Pancreas (tissue), 10 donors: ENCODE measurements at regions of chr11 and their contacts with region 1.

Region 1: GRCh38 chr11:13280092-13280722 is 2.6 kb downstream of the BMAL1 start:
- DNase-seq: no peak
- ATAC-seq: no peak
- H3K4me3 ChIP-seq: no peak overlapping the region
- H3K27ac ChIP-seq: no peak overlapping the region
- H3K4me1 ChIP-seq: peaks cover 0 to 11% (median 11%) of the 10 kb centered on the region in 3 donors
- H3K27me3 ChIP-seq: no peaks in the 10 kb centered on the region
- CTCF ChIP-seq: no peak

Region 2: DNA sequence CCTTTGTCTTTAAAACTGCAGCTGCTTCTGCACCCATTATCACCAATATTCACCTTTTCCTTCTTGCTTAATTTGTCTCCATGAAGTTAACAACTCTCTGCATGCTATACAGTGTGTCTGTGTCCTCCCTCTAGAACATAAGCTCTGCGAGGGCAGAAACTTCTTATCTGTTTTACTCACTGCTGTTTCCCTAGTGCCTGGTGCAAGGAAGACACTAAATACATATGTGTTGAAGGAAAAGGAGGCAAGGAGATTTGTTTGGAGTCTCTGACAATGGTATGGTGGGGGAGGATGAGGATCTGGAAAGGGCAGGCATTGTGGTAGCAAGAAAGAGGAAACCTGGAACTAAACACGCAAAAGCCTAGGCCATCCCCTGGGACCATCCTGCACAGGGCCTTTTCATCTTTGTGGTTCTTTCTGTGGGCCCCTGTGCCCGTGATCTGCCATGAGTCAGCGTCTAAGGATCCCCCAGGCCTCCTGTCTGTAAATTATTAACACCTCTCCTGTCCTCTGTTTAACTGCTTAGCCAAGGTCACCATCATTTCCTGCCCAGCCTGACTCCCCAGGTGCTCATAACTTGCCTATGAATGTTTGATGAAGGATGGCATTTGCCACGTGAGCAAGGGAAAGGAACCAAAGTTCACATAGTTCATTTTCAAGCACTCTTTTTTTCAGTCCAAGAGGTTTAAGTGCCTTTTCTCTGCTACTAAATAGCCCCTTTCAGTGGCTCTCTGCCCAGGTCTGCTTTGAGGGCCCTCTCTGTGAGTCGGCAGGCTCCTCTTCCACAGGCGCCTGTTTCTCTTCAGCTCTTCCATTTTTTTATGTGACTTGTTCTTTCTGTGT is 140.0 kb before region 1 on chr11:
- intact Hi-C with region 1: no loop called
- DNase-seq: peak in 5 of 6 donors; percentile 54 to 86 (median 78)
- ATAC-seq: peak; percentile 96 to 99 (median 98)
- H3K4me3 ChIP-seq: no peak overlapping the region
- H3K27ac ChIP-seq: peak overlapping the region; percentile 13 to 82 (median 58)
- H3K4me1 ChIP-seq: peaks cover 13 to 17% (median 14%) of the 10 kb centered on the region in 3 donors
- H3K27me3 ChIP-seq: no peaks in the 10 kb centered on the region
- CTCF ChIP-seq: no peak

Region 3: DNA sequence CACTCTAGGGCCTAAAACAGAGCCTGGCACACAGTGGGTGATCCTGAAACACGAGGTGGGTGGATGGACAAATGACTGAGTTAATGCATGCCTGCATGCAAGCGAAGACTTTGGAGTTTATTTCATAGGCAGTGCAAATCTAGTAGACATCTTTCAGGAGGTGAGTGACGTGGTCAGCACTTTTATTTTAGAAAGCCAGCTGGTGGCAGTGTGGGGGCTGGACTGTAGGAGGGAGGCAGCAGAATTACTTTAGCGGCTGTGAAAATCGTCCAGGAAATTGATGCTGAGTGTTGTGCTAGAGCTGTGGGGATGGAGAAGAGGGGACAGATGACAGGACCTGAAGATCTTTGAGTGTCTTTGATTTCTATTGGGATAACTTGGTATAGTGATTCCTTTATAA is 44.5 kb after region 1 on chr11:
- intact Hi-C with region 1: loop called in 1 of 3 experiments (anchors 5 kb)
- DNase-seq: no peak
- ATAC-seq: no peak
- H3K4me3 ChIP-seq: no peak overlapping the region
- H3K27ac ChIP-seq: no peak overlapping the region
- H3K4me1 ChIP-seq: no peaks in the 10 kb centered on the region
- H3K27me3 ChIP-seq: no peaks in the 10 kb centered on the region
- CTCF ChIP-seq: no peak

Region 4: GRCh38 chr11:13434247-13435205 is 154.3 kb after region 1 on chr11:
- intact Hi-C with region 1: no loop called
- DNase-seq: no peak
- ATAC-seq: no peak
- H3K4me3 ChIP-seq: no peak overlapping the region
- H3K27ac ChIP-seq: no peak overlapping the region
- H3K4me1 ChIP-seq: no peaks in the 10 kb centered on the region
- H3K27me3 ChIP-seq: no peaks in the 10 kb centered on the region
- CTCF ChIP-seq: no peak

Region 5: DNA sequence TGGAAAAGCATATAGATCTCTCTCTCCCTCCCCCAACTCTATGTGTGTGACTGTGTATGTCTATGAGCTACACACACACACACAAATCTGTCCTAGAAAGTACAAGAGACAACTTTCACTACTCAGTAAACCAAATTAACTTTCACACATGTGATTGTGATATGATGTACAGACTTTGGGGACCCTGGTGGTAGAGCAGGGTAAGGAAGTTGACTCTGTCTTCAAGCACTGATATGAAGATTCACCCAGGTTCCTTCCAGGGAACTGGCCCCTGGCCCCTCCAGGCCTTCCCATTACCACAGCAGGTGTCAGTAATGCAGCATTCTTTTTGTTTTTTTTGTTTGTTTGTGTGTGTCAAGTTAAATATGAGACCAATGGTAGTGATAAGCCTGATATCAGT is 281.7 kb after region 1 on chr11:
- intact Hi-C with region 1: no loop called
- DNase-seq: no peak
- ATAC-seq: no peak
- H3K4me3 ChIP-seq: no peak overlapping the region
- H3K27ac ChIP-seq: no peak overlapping the region
- H3K4me1 ChIP-seq: no peaks in the 10 kb centered on the region
- H3K27me3 ChIP-seq: no peaks in the 10 kb centered on the region
- CTCF ChIP-seq: no peak